ENCODE measurements at regions of chr12 and their contacts with region 1.

Region 1: GRCh38 chr12:6708960-6709394 is 8.4 kb upstream of the PIANP start:
- DNase-seq: no peak
- H3K4me3 ChIP-seq: no peak overlapping the region
- H3K27ac ChIP-seq: no peak overlapping the region
- H3K4me1 ChIP-seq: no peaks in the 10 kb centered on the region
- H3K27me3 ChIP-seq: no peaks in the 10 kb centered on the region
- CTCF ChIP-seq: no peak

Region 2: GRCh38 chr12:6451348-6452244 is 257.4 kb before region 1 on chr12 and contains the start of gene TAPBPL:
- CTCF ChIA-PET with region 1: no interaction called
- POLR2A ChIA-PET with region 1: no interaction called
- intact Hi-C with region 1: no loop called
- DNase-seq: peak; percentile 89
- H3K4me3 ChIP-seq: peak within 1 kb of the TSS; percentile 58
- H3K27ac ChIP-seq: peak within 1 kb of the TSS; percentile 85
- H3K4me1 ChIP-seq: peaks cover 27% of the 10 kb centered on the region
- H3K27me3 ChIP-seq: no peaks in the 10 kb centered on the region
- CTCF ChIP-seq: no peak
- total RNA-seq, gene TAPBPL: 6.9 and 7.4 TPM in 2 replicates

Region 3: DNA sequence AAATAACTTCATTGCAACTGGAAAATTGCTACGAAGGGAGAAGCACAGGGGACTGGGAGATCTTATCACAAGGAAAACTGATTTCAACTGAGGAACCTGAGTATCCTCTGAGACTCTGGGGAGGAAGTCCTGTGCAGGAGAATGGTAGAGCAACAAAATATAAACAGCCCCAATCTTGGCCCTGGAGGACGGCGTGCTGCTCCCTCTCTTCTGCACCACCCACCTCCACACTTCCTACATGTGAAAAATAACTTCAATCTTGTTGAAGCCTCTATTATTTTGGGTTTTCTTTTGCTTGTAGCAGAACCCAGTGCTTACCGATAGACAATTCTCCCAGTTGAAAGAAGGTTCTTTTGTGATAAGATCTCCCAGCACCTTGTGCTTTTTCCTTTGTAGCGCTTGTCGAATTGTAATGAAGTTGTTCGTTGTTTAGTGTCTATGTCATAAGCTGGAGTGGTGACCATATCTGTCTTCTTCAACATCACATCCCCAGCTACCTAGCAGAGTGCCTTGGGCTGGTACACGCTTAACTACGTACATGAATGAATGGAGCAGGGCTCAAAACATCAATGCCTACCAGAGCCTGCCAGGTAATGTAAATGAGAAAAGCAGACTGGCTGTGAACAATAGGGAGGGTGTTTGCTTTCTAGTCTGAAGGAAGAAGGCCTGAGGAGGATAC is 77.6 kb after region 1 on chr12:
- CTCF ChIA-PET with region 1: no interaction called
- POLR2A ChIA-PET with region 1: interaction called, 15 read pairs
- intact Hi-C with region 1: no loop called
- DNase-seq: no peak
- H3K4me3 ChIP-seq: no peak overlapping the region
- H3K27ac ChIP-seq: no peak overlapping the region
- H3K4me1 ChIP-seq: no peaks in the 10 kb centered on the region
- H3K27me3 ChIP-seq: no peaks in the 10 kb centered on the region
- CTCF ChIP-seq: no peak